Heart left ventricle (tissue), 16 donors: ENCODE measurements at regions of chr5 and their contacts with region 1.

Region 1: GRCh38 chr5:149128023-149128875 is 13.0 kb upstream of the ABLIM3 start:
- DNase-seq: peak in 1 of 5 donors; percentile 42
- ATAC-seq: peak in 3 of 4 donors; percentile 53 to 79 (median 68)
- H3K4me3 ChIP-seq: no peak overlapping the region
- H3K27ac ChIP-seq: no peak overlapping the region
- H3K4me1 ChIP-seq: peaks cover 0 to 14% (median 8%) of the 10 kb centered on the region in 12 donors
- H3K27me3 ChIP-seq: no peaks in the 10 kb centered on the region
- CTCF ChIP-seq: peak; percentile 47 to 80 (median 63)
- POLR2A ChIP-seq: no peak

Region 2: GRCh38 chr5:149114403-149115312 is 13.6 kb before region 1 on chr5:
- intact Hi-C with region 1: no loop called
- DNase-seq: peak; percentile 49 to 73 (median 55)
- ATAC-seq: peak; percentile 85 to 97 (median 95)
- H3K4me3 ChIP-seq: no peak overlapping the region
- H3K27ac ChIP-seq: peak overlapping the region in 7 of 12 donors; percentile 2 to 62 (median 38)
- H3K4me1 ChIP-seq: peaks cover 0 to 10% (median 4%) of the 10 kb centered on the region in 12 donors
- H3K27me3 ChIP-seq: no peaks in the 10 kb centered on the region
- CTCF ChIP-seq: peak; percentile 49 to 85 (median 75)
- POLR2A ChIP-seq: no peak

Region 3: DNA sequence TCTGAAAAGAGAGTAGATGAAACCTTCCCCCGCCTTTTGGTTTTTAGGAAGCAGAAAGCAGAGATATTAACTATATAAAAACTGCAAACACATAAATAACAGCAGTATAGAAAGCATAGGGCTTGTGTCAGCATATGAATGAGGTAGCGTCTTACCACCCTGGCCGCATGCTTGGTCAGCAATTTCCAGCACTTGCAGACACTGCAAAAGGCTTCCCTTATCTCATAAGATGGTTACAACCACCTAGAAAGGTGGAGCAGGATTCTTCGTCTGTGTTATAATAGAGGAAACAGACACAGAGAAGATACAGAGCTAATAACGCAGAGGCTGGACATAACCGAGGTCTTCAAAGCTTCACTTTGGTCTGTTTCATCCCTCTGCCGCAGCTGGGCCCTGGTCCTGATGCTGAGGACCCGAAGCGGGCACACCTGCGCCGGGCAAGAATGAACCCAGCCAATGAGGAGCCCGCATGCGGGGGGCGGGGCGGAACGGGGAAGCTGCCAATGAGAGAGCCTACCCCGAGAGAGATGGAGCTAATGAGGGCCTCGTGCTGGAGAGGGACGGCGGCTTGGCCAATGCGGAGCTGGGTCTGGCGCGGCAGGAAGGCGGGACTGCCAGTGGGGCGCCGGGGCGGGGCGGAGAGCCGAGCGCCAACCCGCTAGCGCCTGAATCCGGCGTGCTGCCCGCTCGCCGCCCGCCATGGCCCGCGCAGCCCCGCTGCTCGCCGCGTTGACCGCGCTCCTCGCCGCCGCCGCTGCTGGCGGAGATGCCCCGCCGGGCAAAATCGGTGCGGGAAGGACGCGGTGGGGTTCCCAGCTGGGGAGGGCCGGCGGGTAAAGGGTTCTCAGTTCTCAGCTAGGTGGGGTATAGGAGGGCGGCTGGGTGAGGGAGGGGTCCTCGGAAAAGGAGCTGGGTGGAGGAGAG is 229.4 kb after region 1 on chr5 and contains the start of gene PCYOX1L:
- intact Hi-C with region 1: loop called in 1 of 10 experiments (anchors 10 kb)
- DNase-seq: peak; percentile 97 to 98 (median 97)
- ATAC-seq: peak; percentile 98 to 100 (median 100)
- H3K4me3 ChIP-seq: peak within 1 kb of the TSS; percentile 54 to 97 (median 77)
- H3K27ac ChIP-seq: peak within 1 kb of the TSS in 11 of 12 donors; percentile 31 to 84 (median 65)
- H3K4me1 ChIP-seq: peaks cover 0 to 30% (median 11%) of the 10 kb centered on the region in 12 donors
- H3K27me3 ChIP-seq: no peaks in the 10 kb centered on the region
- CTCF ChIP-seq: peak in 1 of 12 donors; percentile 7
- POLR2A ChIP-seq: peak in 1 of 2 donors; percentile 50
- total RNA-seq, gene PCYOX1L: 2.3 to 6.8 (median 3.7) TPM